ENCODE measurements at regions of chr2 and their contacts with region 1.

Region 1: DNA sequence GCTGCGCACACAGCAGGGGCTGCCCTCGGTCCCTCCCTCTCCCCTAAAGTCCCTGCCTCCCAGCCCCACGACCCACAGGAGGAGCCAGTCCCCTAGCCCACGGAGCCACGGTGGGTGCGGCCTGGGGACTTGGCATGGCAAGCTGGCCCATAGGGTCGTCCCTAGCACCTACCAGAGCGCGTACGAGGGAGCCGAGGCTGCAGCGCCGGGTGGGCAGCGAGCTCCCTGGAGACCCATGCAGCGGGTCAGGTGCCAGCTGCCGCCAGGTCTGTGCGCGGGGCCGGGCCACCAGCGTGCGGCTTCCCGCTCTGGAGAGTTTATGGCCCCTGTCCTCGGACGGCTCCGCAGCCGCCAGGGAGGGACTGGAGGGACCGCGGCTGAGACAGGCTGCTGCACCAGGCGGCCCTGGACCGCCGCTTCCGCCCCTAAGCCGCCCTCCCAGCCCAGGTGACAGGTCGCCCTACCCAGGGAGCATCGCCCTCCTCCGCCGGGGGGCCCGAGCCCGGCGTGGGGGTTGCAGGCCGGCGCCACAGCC is 273.6 kb downstream of the CCDC74A start:
- DNase-seq: no peak
- H3K4me3 Mint-ChIP-seq: no peak overlapping the region
- H3K27ac Mint-ChIP-seq: no peak overlapping the region
- H3K4me1 Mint-ChIP-seq: no peaks in the 10 kb centered on the region
- H3K27me3 Mint-ChIP-seq: peaks cover 3% of the 10 kb centered on the region

Region 2: DNA sequence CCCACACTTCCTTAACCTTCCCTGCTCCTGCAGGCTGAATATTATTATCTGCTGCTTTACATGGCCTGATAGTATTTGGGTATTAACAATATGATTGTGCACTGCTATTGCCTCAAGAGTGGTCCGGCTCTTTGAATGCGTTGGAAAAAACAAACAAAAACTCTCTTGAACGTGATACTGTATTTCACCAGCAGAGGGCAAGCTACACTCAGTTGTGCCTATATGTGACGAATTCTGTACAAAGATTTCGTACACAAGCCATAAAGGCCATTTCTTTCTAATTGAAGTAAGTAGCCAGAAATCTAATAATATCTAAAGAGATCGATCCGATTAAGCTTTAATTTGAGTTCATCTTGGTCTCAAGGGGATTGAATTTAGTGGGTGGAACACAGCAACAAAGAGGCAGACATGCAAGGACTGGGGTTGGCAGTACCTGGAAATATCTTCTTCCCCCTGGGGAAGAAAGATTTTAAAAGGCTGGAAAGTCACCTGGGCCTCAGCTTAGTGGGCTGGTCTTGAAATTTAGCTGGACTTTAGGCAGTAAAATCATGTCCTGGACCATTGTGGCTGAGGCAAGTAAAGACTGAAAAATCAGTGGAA is 388.0 kb before region 1 on chr2:
- CTCF ChIA-PET with region 1: no interaction called
- intact Hi-C with region 1: loop called (anchors 1 kb)
- DNase-seq: peak; percentile 49
- H3K4me3 Mint-ChIP-seq: no peak overlapping the region
- H3K27ac Mint-ChIP-seq: no peak overlapping the region
- H3K4me1 Mint-ChIP-seq: no peaks in the 10 kb centered on the region
- H3K27me3 Mint-ChIP-seq: peaks cover 23% of the 10 kb centered on the region

Region 3: GRCh38 chr2:131552871-131553270 is 248.4 kb before region 1 on chr2:
- CTCF ChIA-PET with region 1: no interaction called
- intact Hi-C with region 1: no loop called
- DNase-seq: no peak
- H3K4me3 Mint-ChIP-seq: no peak overlapping the region
- H3K27ac Mint-ChIP-seq: no peak overlapping the region
- H3K4me1 Mint-ChIP-seq: no peaks in the 10 kb centered on the region
- H3K27me3 Mint-ChIP-seq: peaks cover 21% of the 10 kb centered on the region

Region 4: DNA sequence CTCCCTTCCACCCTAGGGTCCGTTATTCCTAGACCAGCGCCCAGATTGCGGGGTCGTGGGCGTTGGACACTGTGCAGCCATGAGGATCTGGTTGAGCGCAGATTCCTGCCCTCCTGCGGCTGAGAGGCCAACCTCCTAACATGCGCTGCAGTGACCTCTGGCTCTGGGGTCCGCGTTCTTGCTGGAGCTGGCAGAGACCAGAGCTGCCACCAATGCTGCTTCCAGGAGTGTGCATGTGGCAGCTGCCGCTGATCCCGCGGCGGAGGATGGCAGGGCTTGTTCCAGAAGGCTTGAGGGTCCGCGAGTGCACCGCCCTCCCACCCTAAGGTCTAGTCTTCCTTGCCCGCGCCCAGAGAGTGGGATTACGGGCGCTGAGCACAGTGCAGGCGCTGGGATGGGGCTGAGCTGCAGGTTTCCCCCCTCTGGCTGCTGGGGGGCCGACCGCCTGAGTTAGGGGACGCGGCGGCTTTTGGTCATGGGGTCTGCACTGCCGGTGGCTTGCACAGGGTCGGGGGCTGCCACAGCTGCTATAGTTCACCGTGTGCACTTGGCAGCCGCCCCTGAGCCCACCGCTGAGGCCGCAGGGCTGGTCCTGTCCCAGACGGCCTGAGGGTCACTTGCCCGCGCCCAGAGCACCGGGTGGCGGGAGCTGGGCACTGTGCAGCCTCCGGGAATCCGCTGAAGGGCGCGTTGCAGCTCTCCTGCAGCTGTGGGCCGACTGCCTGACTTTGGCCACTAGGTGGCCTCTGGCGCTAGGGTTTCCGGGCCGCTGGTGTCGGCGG is 127.7 kb before region 1 on chr2:
- CTCF ChIA-PET with region 1: interaction called, 17 read pairs
- intact Hi-C with region 1: loop called (anchors 1 kb)
- DNase-seq: peak; percentile 77
- H3K4me3 Mint-ChIP-seq: peak overlapping the region; percentile 24
- H3K27ac Mint-ChIP-seq: no peak overlapping the region
- H3K4me1 Mint-ChIP-seq: peaks cover 3% of the 10 kb centered on the region
- H3K27me3 Mint-ChIP-seq: peaks cover 13% of the 10 kb centered on the region

Region 5: GRCh38 chr2:131682122-131682944 is 118.9 kb before region 1 on chr2:
- CTCF ChIA-PET with region 1: interaction called, 15 read pairs
- intact Hi-C with region 1: no loop called
- DNase-seq: peak; percentile 82
- H3K4me3 Mint-ChIP-seq: peak overlapping the region; percentile 81
- H3K27ac Mint-ChIP-seq: peak overlapping the region; percentile 70
- H3K4me1 Mint-ChIP-seq: peaks cover 33% of the 10 kb centered on the region
- H3K27me3 Mint-ChIP-seq: no peaks in the 10 kb centered on the region

Region 6: GRCh38 chr2:131753675-131754561 is 47.4 kb before region 1 on chr2:
- CTCF ChIA-PET with region 1: no interaction called
- intact Hi-C with region 1: no loop called
- DNase-seq: no peak
- H3K4me3 Mint-ChIP-seq: no peak overlapping the region
- H3K27ac Mint-ChIP-seq: no peak overlapping the region
- H3K4me1 Mint-ChIP-seq: no peaks in the 10 kb centered on the region
- H3K27me3 Mint-ChIP-seq: no peaks in the 10 kb centered on the region

Region 7: GRCh38 chr2:131835621-131836091 is 34.4 kb after region 1 on chr2:
- CTCF ChIA-PET with region 1: no interaction called
- intact Hi-C with region 1: no loop called
- DNase-seq: no peak
- H3K4me3 Mint-ChIP-seq: no peak overlapping the region
- H3K27ac Mint-ChIP-seq: no peak overlapping the region
- H3K4me1 Mint-ChIP-seq: no peaks in the 10 kb centered on the region
- H3K27me3 Mint-ChIP-seq: peaks cover 8% of the 10 kb centered on the region

Region 8: DNA sequence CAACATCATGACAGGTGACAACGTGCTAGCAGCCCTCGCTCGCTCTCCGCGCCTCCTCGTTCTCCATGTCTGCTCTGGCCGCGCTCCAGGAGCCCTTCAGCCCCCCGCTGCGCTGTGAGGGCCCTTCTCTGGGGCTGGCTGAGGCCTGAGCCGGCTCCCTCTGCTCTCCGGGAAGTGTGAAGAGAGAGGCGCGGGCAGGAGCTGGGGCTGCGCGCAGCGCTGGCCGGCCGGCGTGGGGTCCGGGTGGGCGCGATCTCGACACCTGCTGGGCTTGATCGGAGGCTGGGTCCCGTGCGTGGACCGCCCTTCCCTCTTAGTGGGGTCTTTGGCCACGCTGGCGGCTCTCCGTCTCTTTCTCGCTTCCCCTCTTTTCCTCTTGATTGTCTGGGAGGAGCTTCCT is 165.0 kb after region 1 on chr2:
- CTCF ChIA-PET with region 1: no interaction called
- intact Hi-C with region 1: no loop called
- DNase-seq: no peak
- H3K4me3 Mint-ChIP-seq: no peak overlapping the region
- H3K27ac Mint-ChIP-seq: no peak overlapping the region
- H3K4me1 Mint-ChIP-seq: no peaks in the 10 kb centered on the region
- H3K27me3 Mint-ChIP-seq: no peaks in the 10 kb centered on the region